BJ (cell line): ENCODE measurements at regions of chr19 and their contacts with region 1.

Region 1: GRCh38 chr19:45739498-45740439 is 6.5 kb downstream of the MEIOSIN start:
- DNase-seq: no peak
- H3K4me3 ChIP-seq: no peak overlapping the region
- H3K27me3 ChIP-seq: no peaks in the 10 kb centered on the region
- CTCF ChIP-seq: no peak

Region 2: GRCh38 chr19:45764945-45765701 is 25.4 kb after region 1 on chr19:
- CTCF ChIA-PET with region 1: interaction called, 3 read pairs
- POLR2A ChIA-PET with region 1: interaction called, 11 read pairs
- DNase-seq: no peak
- H3K4me3 ChIP-seq: no peak overlapping the region
- H3K27me3 ChIP-seq: no peaks in the 10 kb centered on the region
- CTCF ChIP-seq: no peak